ENCODE measurements at regions of chr16 and their contacts with region 1.

Region 1: DNA sequence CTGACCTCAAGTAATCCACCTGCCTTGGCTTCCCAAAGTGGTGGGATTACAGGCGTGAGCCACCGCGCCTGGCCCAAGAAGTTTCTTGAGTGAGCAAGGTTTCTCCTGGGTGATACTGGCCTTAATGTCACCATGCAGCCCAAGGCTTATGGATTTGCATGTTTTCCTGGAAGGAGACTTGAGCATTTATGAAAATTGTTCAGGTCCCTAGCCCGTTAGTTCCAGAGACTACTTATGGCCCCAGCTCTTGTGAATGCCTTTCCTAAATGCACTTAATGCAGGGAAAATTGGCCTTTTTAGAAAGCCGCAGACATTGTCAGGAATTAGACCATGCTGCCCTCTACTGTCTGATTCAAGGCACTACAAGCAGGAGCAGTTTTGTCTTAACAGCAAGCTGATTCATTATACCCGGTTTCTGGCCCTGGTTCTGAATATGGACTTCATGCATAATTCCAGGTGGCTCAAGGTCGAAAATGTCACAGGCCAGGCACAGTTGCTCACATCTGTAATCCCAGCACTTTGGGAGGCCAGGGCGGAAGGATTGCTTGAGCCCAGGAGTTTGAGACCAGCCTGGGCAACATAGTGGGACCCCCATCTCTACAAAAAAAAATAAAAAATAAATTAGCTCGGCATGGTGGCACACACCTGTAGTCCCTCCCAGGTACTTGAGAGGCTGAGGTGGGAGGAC is 91.3 kb downstream of the SNX29 start:
- H3K4me3 ChIP-seq: no peak overlapping the region
- H3K27ac ChIP-seq: no peak overlapping the region
- H3K4me1 ChIP-seq: no peaks in the 10 kb centered on the region
- CTCF ChIP-seq: peak; percentile 76

Region 2: DNA sequence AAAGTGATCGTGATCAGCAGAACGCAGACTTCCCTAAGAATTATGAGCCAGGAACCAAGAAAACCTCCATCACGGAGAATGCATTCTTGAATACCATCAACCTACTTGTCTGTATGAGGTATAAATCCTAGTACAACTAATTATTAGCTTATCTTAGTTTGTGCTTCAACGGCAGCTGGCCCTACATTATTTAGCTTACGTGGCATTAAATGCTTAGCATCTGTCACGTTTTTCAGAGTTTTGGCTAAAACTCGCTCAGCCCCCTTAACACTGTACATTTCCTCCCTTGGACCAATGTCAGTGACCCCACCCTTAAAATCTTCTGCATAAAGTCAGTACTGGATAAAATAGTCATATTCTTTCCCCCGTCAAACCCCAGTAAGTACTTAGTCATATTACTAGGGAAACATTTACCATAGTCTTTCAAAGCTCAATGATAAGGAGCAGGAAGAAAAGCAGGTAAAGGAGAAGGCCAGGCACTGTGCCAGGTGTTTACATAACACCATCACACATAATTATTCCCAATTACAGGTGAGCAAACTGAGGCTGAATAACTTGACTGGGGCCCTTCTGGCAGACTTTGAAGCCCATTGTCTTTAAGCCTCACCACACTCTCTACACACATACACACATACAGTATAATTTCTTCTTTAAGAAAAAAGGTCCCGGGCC is 308.6 kb before region 1 on chr16:
- CTCF ChIA-PET with region 1: interaction called, 10 read pairs
- POLR2A ChIA-PET with region 1: no interaction called
- H3K4me3 ChIP-seq: no peak overlapping the region
- H3K27ac ChIP-seq: no peak overlapping the region
- H3K4me1 ChIP-seq: peaks cover 14% of the 10 kb centered on the region
- CTCF ChIP-seq: no peak

Region 3: DNA sequence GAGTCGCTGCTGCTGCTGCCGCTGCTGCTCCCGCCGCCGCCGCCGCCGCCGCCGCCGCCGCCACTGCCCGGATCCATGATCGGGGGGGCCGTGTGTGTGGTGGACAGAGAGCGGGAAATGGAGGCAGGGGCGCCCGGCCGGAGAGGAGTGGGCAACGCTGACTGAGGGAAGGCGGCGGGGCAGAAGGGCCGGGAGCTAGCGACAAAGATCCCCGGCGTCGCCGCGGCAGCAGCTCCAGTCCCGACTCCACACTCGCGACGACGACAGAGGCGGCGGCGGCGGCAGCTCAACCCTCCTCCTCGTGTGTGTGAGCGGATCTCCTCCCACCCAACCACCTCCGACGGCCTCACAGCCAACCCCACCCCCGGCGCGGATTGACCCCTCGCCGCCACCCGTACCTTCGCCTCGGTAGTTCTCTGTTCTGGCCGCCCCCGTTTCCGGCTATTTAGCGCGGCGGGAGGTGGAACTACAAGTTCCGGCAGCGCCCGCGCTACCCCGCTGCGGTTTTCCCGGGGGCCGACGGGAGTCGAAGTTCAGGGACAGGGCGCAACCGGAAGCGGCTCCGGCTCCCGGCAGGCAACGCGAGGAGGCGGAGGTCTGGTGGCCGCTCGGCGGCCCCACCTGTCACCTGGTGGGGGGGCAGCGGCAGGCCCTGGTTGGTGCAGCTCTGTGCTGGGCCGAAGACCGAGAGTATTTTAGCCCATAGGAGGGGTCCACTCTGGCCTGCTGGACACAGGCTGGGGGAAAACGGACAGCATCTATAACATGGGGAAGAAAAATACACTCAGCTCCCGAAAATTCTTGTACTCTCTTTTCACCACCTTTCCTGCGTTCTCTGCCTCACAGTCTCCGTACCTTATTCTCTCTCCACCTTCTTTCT is 152.0 kb before region 1 on chr16 and contains the start of gene GSPT1:
- CTCF ChIA-PET with region 1: interaction called, 6 read pairs
- POLR2A ChIA-PET with region 1: interaction called, 11 read pairs
- H3K4me3 ChIP-seq: peak within 1 kb of the TSS; percentile 86
- H3K27ac ChIP-seq: peak within 1 kb of the TSS; percentile 84
- H3K4me1 ChIP-seq: peaks cover 6% of the 10 kb centered on the region
- CTCF ChIP-seq: peak; percentile 47; the same call in 1 of the 2 replicates

Region 4: GRCh38 chr16:11955713-11956123 is 112.1 kb before region 1 on chr16:
- CTCF ChIA-PET with region 1: interaction called, 12 read pairs
- POLR2A ChIA-PET with region 1: no interaction called
- H3K4me3 ChIP-seq: no peak overlapping the region
- H3K27ac ChIP-seq: no peak overlapping the region
- H3K4me1 ChIP-seq: no peaks in the 10 kb centered on the region
- CTCF ChIP-seq: no peak

Region 5: DNA sequence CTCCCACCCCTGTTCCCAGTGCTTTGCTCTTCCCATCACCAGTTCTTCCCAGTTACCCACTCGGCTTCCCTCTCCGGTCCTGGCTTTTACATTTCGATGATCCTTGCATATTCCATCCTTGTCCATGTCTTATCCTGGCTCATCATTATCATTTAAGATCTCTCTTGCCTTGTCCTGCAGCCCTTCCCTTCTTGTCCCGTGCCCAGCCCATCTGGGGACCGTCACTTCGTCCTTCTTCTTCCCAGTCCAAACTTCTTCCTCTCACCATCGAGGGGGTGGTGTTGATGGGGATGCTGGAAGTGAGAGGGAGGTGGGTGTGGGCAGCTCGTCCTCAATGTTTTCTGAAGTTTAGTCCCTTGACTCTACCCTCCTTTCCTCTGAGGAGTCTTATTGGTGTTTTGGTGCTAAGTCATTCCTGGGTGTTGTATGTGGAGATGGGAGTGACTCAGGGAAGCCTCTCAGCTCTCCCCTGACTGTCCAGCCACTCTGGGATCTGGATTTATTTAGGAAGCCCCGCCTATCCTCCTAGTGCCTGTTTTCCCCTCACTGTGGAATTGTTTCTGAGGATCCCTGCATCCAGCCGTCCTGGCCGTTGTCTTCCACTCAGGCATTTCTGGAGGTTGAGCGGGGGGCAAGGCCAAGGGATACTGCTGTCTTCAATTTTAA is 90.3 kb before region 1 on chr16:
- CTCF ChIA-PET with region 1: interaction called, 20 read pairs
- POLR2A ChIA-PET with region 1: interaction called, 10 read pairs
- H3K4me3 ChIP-seq: peak overlapping the region; percentile 94
- H3K27ac ChIP-seq: no peak overlapping the region
- H3K4me1 ChIP-seq: peaks cover 6% of the 10 kb centered on the region; the same call in 1 of the 2 replicates
- CTCF ChIP-seq: no peak

Measured in HEK293 (cell line).